SK-N-SH (cell line): ENCODE measurements at regions of chr6 and their contacts with region 1.

Region 1: GRCh38 chr6:41846666-41847237 is 48.4 kb downstream of the USP49 start:
- DNase-seq: peak; percentile 70
- H3K4me3 ChIP-seq: no peak overlapping the region
- H3K27ac ChIP-seq: peak overlapping the region; percentile 83 to 86
- H3K4me1 ChIP-seq: no peaks in the 10 kb centered on the region
- H3K27me3 ChIP-seq: no peaks in the 10 kb centered on the region
- CTCF ChIP-seq: peak; percentile 88
- EP300 ChIP-seq: no peak
- RAD21 ChIP-seq: peak; percentile 84

Region 2: GRCh38 chr6:41836022-41836659 is 10.6 kb before region 1 on chr6:
- CTCF ChIA-PET with region 1: interaction called, 15 read pairs
- POLR2A ChIA-PET with region 1: no interaction called
- DNase-seq: no peak
- H3K4me3 ChIP-seq: no peak overlapping the region
- H3K27ac ChIP-seq: no peak overlapping the region
- H3K4me1 ChIP-seq: peaks cover 0 to 6% of the 10 kb centered on the region in 2 experiments; a peak in 1 of 4 replicates
- H3K27me3 ChIP-seq: no peaks in the 10 kb centered on the region
- CTCF ChIP-seq: no peak
- EP300 ChIP-seq: no peak
- RAD21 ChIP-seq: no peak

Region 3: DNA sequence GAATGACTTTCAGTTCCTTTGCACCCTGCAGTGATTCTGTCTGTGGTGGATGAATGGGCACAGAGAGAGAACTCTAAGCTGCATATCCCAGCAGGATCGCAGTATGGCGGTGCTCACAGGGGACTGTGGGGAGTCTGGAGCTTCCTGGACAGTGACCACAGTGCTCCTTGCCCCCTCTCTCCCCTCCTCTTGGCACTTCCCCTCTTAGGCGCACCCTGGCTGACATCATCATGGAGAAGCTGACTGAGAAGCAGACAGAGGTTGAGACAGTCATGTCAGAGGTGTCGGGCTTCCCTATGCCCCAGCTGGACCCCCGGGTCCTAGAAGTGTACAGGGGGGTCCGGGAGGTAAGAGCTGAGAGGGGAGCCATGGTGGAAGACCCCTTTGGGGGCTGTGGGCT is 83.2 kb after region 1 on chr6:
- CTCF ChIA-PET with region 1: interaction called, 11 read pairs
- POLR2A ChIA-PET with region 1: no interaction called
- DNase-seq: no peak
- H3K4me3 ChIP-seq: no peak overlapping the region
- H3K27ac ChIP-seq: no peak overlapping the region
- H3K4me1 ChIP-seq: no peaks in the 10 kb centered on the region; a peak in 1 of 4 replicates
- H3K27me3 ChIP-seq: no peaks in the 10 kb centered on the region
- CTCF ChIP-seq: no peak
- EP300 ChIP-seq: no peak
- RAD21 ChIP-seq: no peak

Region 4: GRCh38 chr6:42009966-42010891 is 163.5 kb after region 1 on chr6:
- CTCF ChIA-PET with region 1: no interaction called
- POLR2A ChIA-PET with region 1: no interaction called
- DNase-seq: no peak
- H3K4me3 ChIP-seq: no peak overlapping the region
- H3K27ac ChIP-seq: no peak overlapping the region
- H3K4me1 ChIP-seq: no peaks in the 10 kb centered on the region; a peak in 1 of 4 replicates
- H3K27me3 ChIP-seq: no peaks in the 10 kb centered on the region
- CTCF ChIP-seq: no peak
- EP300 ChIP-seq: no peak
- RAD21 ChIP-seq: no peak

Region 5: DNA sequence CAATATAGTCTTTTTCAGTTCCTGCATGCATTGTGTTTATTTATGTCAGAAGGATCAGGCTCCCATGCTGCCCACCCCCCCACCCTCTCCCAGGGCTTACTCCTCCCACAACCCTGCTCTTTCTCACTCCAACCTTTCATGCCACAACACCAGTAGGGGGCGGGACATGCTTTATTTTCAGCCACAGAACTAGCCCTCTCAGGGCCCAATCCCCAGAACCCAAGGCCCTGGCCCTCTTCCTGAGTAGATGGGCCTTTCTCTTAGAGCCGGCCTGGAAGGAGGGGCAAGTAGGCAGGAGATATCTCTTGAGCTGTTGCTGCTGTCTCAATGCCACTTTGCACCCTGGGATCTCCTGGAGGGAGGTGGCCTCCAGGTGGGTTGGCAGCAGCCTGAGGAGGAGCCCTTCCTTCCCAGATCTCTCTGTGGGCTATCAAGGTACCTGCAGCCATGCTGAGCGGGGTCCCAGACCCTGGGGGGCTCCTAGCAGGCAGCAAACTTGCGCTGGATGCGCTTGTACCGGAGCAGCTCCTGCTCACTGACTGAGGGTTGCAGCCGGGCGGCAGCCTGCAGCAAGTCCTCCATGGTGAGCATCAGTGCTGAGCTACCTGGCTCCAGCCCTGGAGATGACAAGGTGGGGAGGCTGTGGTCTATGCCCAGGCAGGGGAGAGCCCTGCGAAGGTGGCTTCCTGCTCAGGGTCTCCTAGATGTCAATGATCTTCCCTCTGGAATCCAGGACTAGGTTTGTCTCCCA is 1117.3 kb after region 1 on chr6:
- CTCF ChIA-PET with region 1: no interaction called
- POLR2A ChIA-PET with region 1: no interaction called
- DNase-seq: peak; percentile 75
- H3K4me3 ChIP-seq: no peak overlapping the region
- H3K27ac ChIP-seq: no peak overlapping the region
- H3K4me1 ChIP-seq: peaks cover 0 to 7% of the 10 kb centered on the region in 2 experiments; a peak in 1 of 4 replicates
- H3K27me3 ChIP-seq: no peaks in the 10 kb centered on the region
- CTCF ChIP-seq: peak; percentile 42
- EP300 ChIP-seq: no peak
- RAD21 ChIP-seq: peak; percentile 48